ENCODE measurements at regions of chr10 and their contacts with region 1.

Region 1: DNA sequence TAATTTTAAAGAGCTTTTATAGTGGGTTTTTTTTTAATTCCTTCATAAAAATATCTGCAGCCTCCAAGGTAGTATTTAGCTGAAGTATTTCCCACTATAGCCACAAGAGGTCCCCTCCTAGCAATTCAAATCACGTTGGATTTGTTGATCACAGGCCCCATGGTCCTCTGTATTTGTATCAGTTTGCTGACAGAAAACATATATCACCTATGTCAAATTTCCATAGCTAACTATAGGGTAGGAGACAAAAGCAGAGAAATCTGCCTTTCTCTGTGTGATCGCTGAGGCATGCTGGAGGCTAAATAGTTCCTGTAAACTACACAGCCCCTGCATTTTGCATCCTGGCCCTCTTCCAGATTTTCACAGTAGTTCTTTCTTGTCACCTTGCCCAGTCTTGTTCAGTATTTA is 1.7 kb upstream of the CTNNA3 start:
- DNase-seq: peak; percentile 40 to 61 (median 56)
- H3K4me3 ChIP-seq: no peak overlapping the region
- H3K4me3 Mint-ChIP-seq: no peak overlapping the region
- H3K27ac ChIP-seq: no peak overlapping the region
- H3K27ac Mint-ChIP-seq: peak overlapping the region in 1 of 7 donors; percentile 52
- H3K4me1 ChIP-seq: peaks cover 5% of the 10 kb centered on the region
- H3K4me1 Mint-ChIP-seq: peaks cover 2 to 19% (median 13%) of the 10 kb centered on the region in 4 donors
- H3K27me3 ChIP-seq: peaks cover 14% of the 10 kb centered on the region
- H3K27me3 Mint-ChIP-seq: peaks cover 23% of the 10 kb centered on the region in 2 donors

Region 2: GRCh38 chr10:67612577-67613537 is 84.9 kb before region 1 on chr10:
- CTCF ChIA-PET with region 1: interaction called, 10 read pairs
- POLR2A ChIA-PET with region 1: interaction called, 6 read pairs
- intact Hi-C with region 1: no loop called
- DNase-seq: peak; percentile 77 to 89 (median 81)
- H3K4me3 ChIP-seq: peak overlapping the region in 1 of 2 donors; percentile 39
- H3K4me3 Mint-ChIP-seq: peak overlapping the region; percentile 39 to 87 (median 76)
- H3K27ac ChIP-seq: peak overlapping the region; percentile 13
- H3K27ac Mint-ChIP-seq: peak overlapping the region; percentile 69 to 89 (median 78)
- H3K4me1 ChIP-seq: peaks cover 25% of the 10 kb centered on the region
- H3K4me1 Mint-ChIP-seq: peaks cover 18 to 33% (median 24%) of the 10 kb centered on the region in 4 donors
- H3K27me3 ChIP-seq: no peaks in the 10 kb centered on the region
- H3K27me3 Mint-ChIP-seq: peaks cover 0 to 2% of the 10 kb centered on the region in 2 donors

Region 3: DNA sequence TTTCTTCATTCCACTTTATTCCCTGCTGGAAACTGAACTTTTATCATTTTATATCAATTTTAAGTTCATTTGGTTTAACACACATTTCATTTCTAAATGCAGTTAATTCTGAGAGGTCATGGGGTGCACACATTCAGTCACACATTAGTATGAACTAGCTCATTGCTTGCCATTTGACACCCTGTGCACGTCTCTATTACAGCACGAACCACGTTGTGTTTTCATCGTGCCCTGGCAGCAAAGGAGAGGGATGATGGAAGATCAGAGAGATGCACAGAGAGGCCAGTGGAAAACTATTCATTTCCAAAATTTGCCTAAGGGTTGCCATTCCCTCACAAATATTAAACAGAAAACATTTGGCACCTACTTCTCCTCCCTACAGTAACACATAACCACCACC is 47.2 kb before region 1 on chr10:
- CTCF ChIA-PET with region 1: no interaction called
- POLR2A ChIA-PET with region 1: no interaction called
- intact Hi-C with region 1: no loop called
- DNase-seq: no peak
- H3K4me3 ChIP-seq: no peak overlapping the region
- H3K4me3 Mint-ChIP-seq: no peak overlapping the region
- H3K27ac ChIP-seq: no peak overlapping the region
- H3K27ac Mint-ChIP-seq: no peak overlapping the region
- H3K4me1 ChIP-seq: no peaks in the 10 kb centered on the region
- H3K4me1 Mint-ChIP-seq: no peaks in the 10 kb centered on the region
- H3K27me3 ChIP-seq: no peaks in the 10 kb centered on the region
- H3K27me3 Mint-ChIP-seq: peaks cover 2% of the 10 kb centered on the region in 2 donors

Region 4: GRCh38 chr10:67666416-67667034 is 31.2 kb before region 1 on chr10:
- CTCF ChIA-PET with region 1: interaction called, 15 read pairs
- POLR2A ChIA-PET with region 1: no interaction called
- intact Hi-C with region 1: loop called (anchors 2 kb)
- DNase-seq: peak in 4 of 5 donors; percentile 12 to 31 (median 21)
- H3K4me3 ChIP-seq: no peak overlapping the region
- H3K4me3 Mint-ChIP-seq: no peak overlapping the region
- H3K27ac ChIP-seq: no peak overlapping the region
- H3K27ac Mint-ChIP-seq: no peak overlapping the region
- H3K4me1 ChIP-seq: no peaks in the 10 kb centered on the region
- H3K4me1 Mint-ChIP-seq: no peaks in the 10 kb centered on the region
- H3K27me3 ChIP-seq: no peaks in the 10 kb centered on the region
- H3K27me3 Mint-ChIP-seq: no peaks in the 10 kb centered on the region

Region 5: DNA sequence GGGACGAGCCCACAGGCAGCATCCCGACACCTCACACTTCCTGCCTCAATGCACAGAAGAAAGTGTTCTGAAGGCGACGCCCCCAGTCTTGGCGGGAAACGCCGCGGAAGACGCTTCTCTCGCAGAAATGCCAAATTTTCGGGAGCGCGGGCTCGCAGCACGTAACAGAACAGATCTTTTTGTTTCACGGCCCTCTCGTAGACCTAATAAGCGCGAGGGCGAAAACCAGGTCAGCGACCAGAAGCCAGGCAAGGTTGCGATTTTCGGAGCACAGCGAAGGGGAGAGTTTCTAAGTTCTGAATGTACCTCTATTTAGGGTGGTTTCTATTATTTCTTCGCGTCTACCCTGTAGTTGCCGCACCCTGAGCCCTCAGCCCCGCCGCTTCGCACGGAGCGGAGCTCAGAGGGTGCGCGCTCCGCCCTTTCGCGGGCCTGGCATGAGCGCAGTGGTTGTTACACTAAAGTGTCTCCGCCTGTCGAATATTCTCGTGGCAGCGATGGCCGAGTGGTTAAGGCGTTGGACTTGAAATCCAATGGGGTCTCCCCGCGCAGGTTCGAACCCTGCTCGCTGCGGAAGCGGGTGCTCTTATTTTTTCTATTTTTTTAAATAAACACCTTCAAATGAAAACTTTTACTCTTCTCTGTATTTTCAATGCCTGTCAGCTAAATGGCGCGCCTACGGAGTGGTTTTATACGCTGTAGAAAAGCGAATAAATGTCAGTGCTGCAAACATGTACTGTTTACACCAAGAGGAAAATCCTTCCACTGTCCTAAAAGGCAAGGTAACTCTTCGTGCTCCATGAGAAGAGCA is 66.5 kb after region 1 on chr10:
- CTCF ChIA-PET with region 1: interaction called, 42 read pairs
- POLR2A ChIA-PET with region 1: interaction called, 16 read pairs
- intact Hi-C with region 1: loop called (anchors 1 kb)
- DNase-seq: peak; percentile 96 to 99 (median 97)
- H3K4me3 ChIP-seq: peak overlapping the region; percentile 58 to 98
- H3K4me3 Mint-ChIP-seq: peak overlapping the region; percentile 90 to 98 (median 95)
- H3K27ac ChIP-seq: peak overlapping the region; percentile 73
- H3K27ac Mint-ChIP-seq: peak overlapping the region; percentile 98 to 100 (median 99)
- H3K4me1 ChIP-seq: peaks cover 14% of the 10 kb centered on the region
- H3K4me1 Mint-ChIP-seq: peaks cover 9 to 28% (median 14%) of the 10 kb centered on the region in 4 donors
- H3K27me3 ChIP-seq: no peaks in the 10 kb centered on the region
- H3K27me3 Mint-ChIP-seq: peaks cover 4 to 9% of the 10 kb centered on the region in 2 donors

Region 6: DNA sequence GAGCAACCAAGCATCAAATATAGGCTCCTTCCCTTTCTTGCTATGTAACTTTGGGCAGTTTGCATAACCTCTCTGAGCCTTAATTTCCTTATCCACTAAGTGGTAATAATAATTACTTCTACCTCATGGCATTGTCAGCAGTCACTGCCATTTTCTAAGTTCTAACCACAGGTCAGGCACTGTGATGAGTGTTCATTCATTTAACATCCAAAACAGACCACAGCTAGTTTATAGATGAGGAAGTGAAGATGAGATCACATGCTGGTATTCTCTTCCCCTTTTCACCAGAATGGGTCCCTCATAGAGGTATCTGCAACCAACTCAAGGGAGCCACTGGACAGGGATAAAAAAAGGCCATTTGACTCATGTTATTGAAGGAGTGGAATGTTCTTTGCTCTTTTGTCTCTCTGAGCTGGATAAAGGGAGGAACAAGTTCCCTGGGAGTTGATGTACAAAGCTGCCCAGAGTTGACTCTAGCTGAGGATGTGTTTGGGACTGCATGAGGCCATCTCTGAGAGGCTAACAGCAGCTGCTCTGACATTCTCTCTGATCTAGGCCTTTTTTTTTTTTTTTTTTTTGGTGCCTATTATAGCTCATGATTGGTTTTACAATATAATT is 75.3 kb after region 1 on chr10:
- CTCF ChIA-PET with region 1: interaction called, 433 read pairs
- POLR2A ChIA-PET with region 1: interaction called, 3 read pairs
- intact Hi-C with region 1: no loop called
- DNase-seq: no peak
- H3K4me3 ChIP-seq: no peak overlapping the region
- H3K4me3 Mint-ChIP-seq: no peak overlapping the region
- H3K27ac ChIP-seq: no peak overlapping the region
- H3K27ac Mint-ChIP-seq: peak overlapping the region in 2 of 7 donors; percentile 22 to 26
- H3K4me1 ChIP-seq: no peaks in the 10 kb centered on the region
- H3K4me1 Mint-ChIP-seq: peaks cover 0 to 2% (median 0%) of the 10 kb centered on the region in 4 donors
- H3K27me3 ChIP-seq: no peaks in the 10 kb centered on the region
- H3K27me3 Mint-ChIP-seq: no peaks in the 10 kb centered on the region

Region 7: DNA sequence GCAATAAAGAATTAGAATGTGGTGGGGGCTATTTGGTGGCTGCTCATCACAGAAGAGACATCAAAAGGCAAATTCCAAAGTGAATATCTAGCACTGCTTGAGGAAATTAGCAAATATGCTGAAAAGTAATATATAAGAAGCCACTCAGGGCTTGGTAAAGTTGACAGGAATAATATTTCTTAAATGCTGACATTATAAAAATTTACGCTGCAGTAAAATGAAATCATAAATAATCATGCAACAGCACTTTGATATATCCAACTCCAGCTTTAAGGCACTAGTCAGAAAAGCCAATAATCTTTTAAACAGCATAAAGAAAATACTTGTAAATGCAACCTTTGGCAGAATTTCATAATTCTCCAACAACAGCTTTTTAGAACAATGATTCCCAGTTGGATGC is 103.4 kb after region 1 on chr10:
- CTCF ChIA-PET with region 1: no interaction called
- POLR2A ChIA-PET with region 1: no interaction called
- intact Hi-C with region 1: no loop called
- DNase-seq: no peak
- H3K4me3 ChIP-seq: no peak overlapping the region
- H3K4me3 Mint-ChIP-seq: no peak overlapping the region
- H3K27ac ChIP-seq: no peak overlapping the region
- H3K27ac Mint-ChIP-seq: no peak overlapping the region
- H3K4me1 ChIP-seq: no peaks in the 10 kb centered on the region
- H3K4me1 Mint-ChIP-seq: no peaks in the 10 kb centered on the region
- H3K27me3 ChIP-seq: no peaks in the 10 kb centered on the region
- H3K27me3 Mint-ChIP-seq: no peaks in the 10 kb centered on the region

Region 8: DNA sequence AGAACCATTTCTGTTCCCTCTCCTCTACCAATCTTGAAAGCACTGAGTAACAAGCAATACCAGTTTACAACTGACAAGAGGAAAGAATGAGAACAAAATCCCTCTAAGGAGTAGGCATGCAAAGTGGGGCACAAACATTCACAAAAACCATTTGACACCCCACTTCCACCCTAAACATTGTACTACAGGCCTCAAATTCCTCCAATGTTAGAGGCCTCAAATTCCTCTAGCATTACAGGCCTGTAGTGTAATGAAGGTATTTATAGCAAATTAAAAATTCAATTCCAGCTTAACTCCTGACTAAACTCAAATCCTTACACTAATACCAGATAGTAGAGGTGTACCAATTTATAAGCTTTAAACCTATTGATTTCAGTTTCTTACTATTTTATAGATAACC is 272.1 kb after region 1 on chr10:
- CTCF ChIA-PET with region 1: no interaction called
- POLR2A ChIA-PET with region 1: no interaction called
- intact Hi-C with region 1: no loop called
- DNase-seq: no peak
- H3K4me3 ChIP-seq: no peak overlapping the region
- H3K4me3 Mint-ChIP-seq: no peak overlapping the region
- H3K27ac ChIP-seq: no peak overlapping the region
- H3K27ac Mint-ChIP-seq: peak overlapping the region in 1 of 7 donors; percentile 36
- H3K4me1 ChIP-seq: no peaks in the 10 kb centered on the region
- H3K4me1 Mint-ChIP-seq: peaks cover 7 to 18% (median 11%) of the 10 kb centered on the region in 4 donors
- H3K27me3 ChIP-seq: no peaks in the 10 kb centered on the region
- H3K27me3 Mint-ChIP-seq: no peaks in the 10 kb centered on the region

Region 9: GRCh38 chr10:68142761-68143160 is 445.0 kb after region 1 on chr10:
- CTCF ChIA-PET with region 1: no interaction called
- POLR2A ChIA-PET with region 1: no interaction called
- intact Hi-C with region 1: no loop called
- DNase-seq: no peak
- H3K4me3 ChIP-seq: no peak overlapping the region
- H3K4me3 Mint-ChIP-seq: no peak overlapping the region
- H3K27ac ChIP-seq: no peak overlapping the region
- H3K27ac Mint-ChIP-seq: no peak overlapping the region
- H3K4me1 ChIP-seq: no peaks in the 10 kb centered on the region
- H3K4me1 Mint-ChIP-seq: no peaks in the 10 kb centered on the region
- H3K27me3 ChIP-seq: no peaks in the 10 kb centered on the region
- H3K27me3 Mint-ChIP-seq: peaks cover 6 to 8% of the 10 kb centered on the region in 2 donors

Region 10: GRCh38 chr10:68156373-68157185 is 458.9 kb after region 1 on chr10:
- CTCF ChIA-PET with region 1: interaction called, 7 read pairs
- POLR2A ChIA-PET with region 1: no interaction called
- intact Hi-C with region 1: loop called (anchors 5 kb)
- DNase-seq: peak; percentile 51 to 55 (median 53)
- H3K4me3 ChIP-seq: no peak overlapping the region
- H3K4me3 Mint-ChIP-seq: no peak overlapping the region
- H3K27ac ChIP-seq: no peak overlapping the region
- H3K27ac Mint-ChIP-seq: no peak overlapping the region
- H3K4me1 ChIP-seq: no peaks in the 10 kb centered on the region
- H3K4me1 Mint-ChIP-seq: peaks cover 0 to 1% (median 0%) of the 10 kb centered on the region in 4 donors
- H3K27me3 ChIP-seq: no peaks in the 10 kb centered on the region
- H3K27me3 Mint-ChIP-seq: peaks cover 0 to 7% of the 10 kb centered on the region in 2 donors